CD8-positive, alpha-beta memory T cell (primary cell): ENCODE measurements at regions of chr10 and their contacts with region 1.

Region 1: DNA sequence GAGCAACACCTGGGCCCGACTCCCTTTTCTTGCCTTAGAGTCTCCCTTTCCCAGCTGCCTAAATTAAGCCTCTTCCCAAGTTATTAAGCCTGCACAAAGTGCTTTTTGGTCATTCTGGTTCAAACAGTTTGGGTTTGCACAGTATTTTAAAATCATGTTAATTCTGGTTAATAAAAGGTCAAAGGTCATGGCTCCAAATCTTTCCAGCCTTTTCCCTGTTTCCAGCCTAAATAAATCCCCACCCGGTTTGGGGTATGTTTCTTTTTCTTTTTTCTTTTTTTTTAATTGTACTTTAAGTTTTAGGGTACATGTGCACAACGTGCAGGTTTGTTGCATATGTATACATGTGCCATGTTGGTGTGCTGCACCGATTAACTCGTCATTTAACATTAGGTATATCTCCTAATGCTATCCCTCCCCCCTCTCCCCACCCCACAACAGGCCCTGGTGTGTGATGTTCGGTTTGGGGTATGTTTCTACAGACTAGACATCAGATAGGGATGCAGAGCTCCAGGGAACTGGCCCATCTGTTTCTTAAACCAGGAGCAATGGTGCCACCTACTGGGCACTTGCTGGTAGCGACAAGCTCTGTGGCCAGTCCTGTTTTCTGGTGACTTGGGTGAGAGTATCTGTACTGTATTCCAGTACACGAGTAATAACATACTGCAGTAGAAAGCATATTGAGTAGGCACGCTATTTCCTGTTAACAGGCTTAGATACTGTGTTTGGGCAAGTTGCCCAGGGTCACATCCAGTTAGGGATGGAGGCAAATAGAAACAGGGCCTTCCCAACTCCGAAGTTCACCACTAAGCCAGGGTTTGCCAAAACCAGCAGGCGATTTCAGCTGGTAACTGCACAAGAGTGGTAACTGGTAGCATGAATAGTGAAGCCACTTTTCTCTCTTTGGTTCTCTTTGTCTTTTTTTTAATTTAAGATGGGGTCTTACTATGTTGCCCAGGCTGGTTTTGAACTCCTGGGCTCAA is 60.6 kb upstream of the TRIM8 start:
- DNase-seq: peak; percentile 64 to 87 (median 66)
- H3K4me3 ChIP-seq: no peak overlapping the region
- H3K4me3 Mint-ChIP-seq: no peak overlapping the region
- H3K27ac ChIP-seq: no peak overlapping the region
- H3K27ac Mint-ChIP-seq: peak overlapping the region in 4 of 8 donors; percentile 50 to 71 (median 58)
- H3K4me1 ChIP-seq: no peaks in the 10 kb centered on the region
- H3K4me1 Mint-ChIP-seq: peaks cover 0 to 12% (median 6%) of the 10 kb centered on the region in 3 donors
- H3K27me3 ChIP-seq: no peaks in the 10 kb centered on the region
- H3K27me3 Mint-ChIP-seq: no peaks in the 10 kb centered on the region

Region 2: DNA sequence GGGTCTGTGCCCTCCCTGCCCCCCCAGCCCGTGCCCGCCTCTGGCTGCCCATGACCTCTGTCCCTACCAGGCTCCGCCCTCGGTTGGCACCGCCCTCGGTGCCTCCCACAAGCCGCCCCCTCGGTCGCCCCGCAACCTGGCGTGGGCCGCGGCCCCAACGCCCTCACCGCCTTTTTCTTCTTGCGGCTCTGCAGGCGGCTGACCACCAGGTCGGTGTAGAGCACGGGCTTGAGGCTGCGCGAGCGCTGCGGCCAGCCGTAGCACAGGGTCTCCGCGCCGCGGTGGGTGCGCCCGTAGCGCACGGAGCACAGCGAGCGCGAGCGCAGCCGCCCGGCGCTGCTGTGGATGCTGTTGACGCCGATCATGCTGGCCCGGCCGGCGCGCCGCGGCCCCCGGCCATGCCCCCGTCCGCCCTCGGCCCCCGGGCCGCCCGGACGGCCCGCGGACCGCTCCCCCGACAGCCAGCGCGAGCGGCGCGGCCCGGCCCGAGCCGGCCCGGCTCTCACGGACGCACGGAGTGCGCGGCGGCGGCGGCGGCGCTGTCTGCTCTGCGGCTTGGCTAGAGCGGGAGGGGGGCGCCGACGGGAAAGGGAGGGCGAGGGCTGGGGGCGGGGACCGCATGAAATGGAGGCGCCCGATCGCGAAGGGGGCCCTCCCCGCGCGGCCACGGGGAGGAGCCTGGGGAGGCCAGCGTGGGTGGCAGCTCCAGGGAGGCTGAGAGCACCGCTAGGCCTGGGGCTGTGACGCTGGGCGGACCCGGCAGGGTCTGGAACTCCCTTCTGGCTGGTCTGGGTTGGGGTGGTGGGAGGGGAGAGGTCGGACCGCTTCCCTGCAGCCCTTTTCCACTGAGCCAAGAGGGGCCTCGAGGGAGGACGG is 174.8 kb before region 1 on chr10:
- CTCF ChIA-PET with region 1: no interaction called
- POLR2A ChIA-PET with region 1: no interaction called
- DNase-seq: peak; percentile 40 to 78 (median 53)
- H3K4me3 ChIP-seq: peak overlapping the region; percentile 64
- H3K4me3 Mint-ChIP-seq: peak overlapping the region; percentile 76 to 80 (median 79)
- H3K27ac ChIP-seq: no peak overlapping the region
- H3K27ac Mint-ChIP-seq: peak overlapping the region in 4 of 8 donors; percentile 12 to 78 (median 52)
- H3K4me1 ChIP-seq: peaks cover 21% of the 10 kb centered on the region
- H3K4me1 Mint-ChIP-seq: peaks cover 16 to 33% (median 27%) of the 10 kb centered on the region in 3 donors
- H3K27me3 ChIP-seq: peaks cover 37% of the 10 kb centered on the region
- H3K27me3 Mint-ChIP-seq: peaks cover 26 to 43% of the 10 kb centered on the region in 2 donors

Region 3: GRCh38 chr10:102503281-102504220 is 80.2 kb before region 1 on chr10 and contains the start of gene SUFU:
- CTCF ChIA-PET with region 1: interaction called, 27 read pairs
- POLR2A ChIA-PET with region 1: interaction called, 10 read pairs
- DNase-seq: peak; percentile 97 to 99 (median 97)
- H3K4me3 ChIP-seq: peak within 1 kb of the TSS; percentile 99
- H3K4me3 Mint-ChIP-seq: no peak within 1 kb of the TSS
- H3K27ac ChIP-seq: peak within 1 kb of the TSS; percentile 79
- H3K27ac Mint-ChIP-seq: peak within 1 kb of the TSS; percentile 49 to 95 (median 90)
- H3K4me1 ChIP-seq: peaks cover 39% of the 10 kb centered on the region
- H3K4me1 Mint-ChIP-seq: peaks cover 29 to 55% (median 45%) of the 10 kb centered on the region in 3 donors
- H3K27me3 ChIP-seq: no peaks in the 10 kb centered on the region
- H3K27me3 Mint-ChIP-seq: no peaks in the 10 kb centered on the region
- total RNA-seq, gene SUFU: 7.5 to 8.3 TPM

Region 4: GRCh38 chr10:102537367-102537766 is 46.4 kb before region 1 on chr10:
- CTCF ChIA-PET with region 1: no interaction called
- POLR2A ChIA-PET with region 1: no interaction called
- DNase-seq: no peak
- H3K4me3 ChIP-seq: no peak overlapping the region
- H3K4me3 Mint-ChIP-seq: no peak overlapping the region
- H3K27ac ChIP-seq: no peak overlapping the region
- H3K27ac Mint-ChIP-seq: peak overlapping the region in 2 of 8 donors; percentile 5 to 6
- H3K4me1 ChIP-seq: no peaks in the 10 kb centered on the region
- H3K4me1 Mint-ChIP-seq: peaks cover 5 to 6% (median 5%) of the 10 kb centered on the region in 3 donors
- H3K27me3 ChIP-seq: no peaks in the 10 kb centered on the region
- H3K27me3 Mint-ChIP-seq: no peaks in the 10 kb centered on the region